Posterior vena cava (tissue), 2 donors: ENCODE measurements at regions of chr2 and their contacts with region 1.

Region 1: DNA sequence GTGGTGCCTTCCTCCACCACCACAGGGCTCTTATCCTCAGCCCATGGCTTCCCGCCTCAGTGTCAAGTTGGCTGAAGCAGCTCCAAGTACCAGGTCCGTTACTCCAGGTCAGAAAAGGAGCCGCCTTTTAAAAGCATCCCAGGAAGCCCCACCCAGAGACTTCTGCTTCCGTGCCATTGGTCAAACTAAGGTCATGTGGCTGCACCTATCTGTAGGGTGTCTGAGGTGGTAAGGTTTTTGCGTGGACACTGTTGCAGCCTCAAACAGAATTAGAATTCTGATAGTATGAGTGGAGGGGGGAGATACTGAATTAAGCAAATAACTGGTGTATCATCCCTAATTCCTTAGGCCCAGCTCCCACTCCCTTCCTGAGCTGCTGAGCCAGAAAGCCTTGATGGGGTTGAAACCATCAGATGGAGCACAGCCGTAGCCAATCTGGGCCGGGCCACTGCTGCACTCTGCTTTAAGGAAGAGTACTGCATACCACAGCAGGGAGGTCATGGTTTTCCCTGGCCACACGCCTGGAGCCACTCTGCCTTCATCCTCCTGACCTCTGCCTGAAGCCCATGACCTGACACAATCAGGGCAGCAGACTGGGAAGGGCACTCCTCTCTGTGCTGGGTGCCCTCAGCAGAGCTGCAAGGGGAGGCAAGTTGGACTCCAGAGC is 8.4 kb downstream of the TMEM247 start:
- DNase-seq: peak; percentile 92

Region 2: DNA sequence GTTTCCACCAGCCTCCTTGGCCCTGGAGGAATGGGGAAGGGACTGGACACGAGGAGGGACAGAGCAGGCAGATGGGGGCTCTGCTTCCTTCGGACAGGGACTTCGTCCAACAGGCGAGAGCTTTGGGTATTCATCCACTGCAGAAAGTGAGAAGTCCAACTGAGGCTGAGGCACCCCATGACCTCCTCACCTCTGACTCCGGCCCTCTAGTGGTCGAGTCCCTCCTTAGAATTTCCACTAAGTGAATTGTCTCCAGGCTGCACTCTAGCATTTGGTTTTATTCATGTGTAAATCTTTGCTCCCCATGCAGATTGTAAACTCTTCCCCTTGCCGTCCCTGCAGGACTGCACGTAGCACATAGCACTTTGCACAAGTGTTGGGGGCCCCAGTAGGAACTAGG is 67.2 kb after region 1 on chr2:
- intact Hi-C with region 1: loop called in 1 of 2 experiments (anchors 10 kb)
- DNase-seq: no peak